Dorsolateral prefrontal cortex (tissue), 120 donors: ENCODE measurements at regions of chr7 and their contacts with region 1.

Region 1: DNA sequence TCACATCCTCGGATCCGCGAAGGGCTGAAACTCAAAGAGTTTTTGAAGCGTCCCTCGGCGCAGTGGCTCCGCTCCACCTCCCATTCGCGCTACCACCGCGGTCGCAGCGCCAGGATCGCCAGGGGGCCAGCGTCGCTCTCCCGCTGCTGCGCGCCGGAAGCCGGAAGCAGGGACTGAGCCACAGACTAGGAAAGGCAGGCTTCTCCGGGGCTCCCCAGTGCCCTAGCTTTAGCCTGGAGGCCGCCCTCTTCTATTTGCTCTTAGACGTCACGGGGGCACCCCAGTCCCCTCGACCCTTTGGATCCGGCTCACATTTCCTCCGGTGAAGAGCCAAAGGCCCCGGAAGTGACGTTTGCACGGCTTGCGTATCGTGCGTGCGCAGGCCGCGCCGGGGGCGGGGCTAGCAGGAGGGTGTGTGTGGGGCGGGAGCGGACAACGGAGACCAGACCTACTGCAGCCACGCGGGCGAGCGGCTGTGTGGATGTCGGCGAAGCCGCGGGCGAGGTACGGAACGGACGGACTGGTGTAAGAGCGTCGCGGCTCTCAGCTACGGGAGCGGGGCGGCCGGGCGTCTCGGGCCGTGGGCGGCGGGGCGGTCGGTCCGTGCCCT is 25.5 kb downstream of the KCTD7 start:
- DNase-seq: peak; percentile 98 to 99 (median 98)
- H3K4me3 ChIP-seq: peak overlapping the region; percentile 68 to 99 (median 92)
- H3K27ac ChIP-seq: peak overlapping the region; percentile 90 to 99 (median 98)
- H3K27me3 ChIP-seq: no peaks in the 10 kb centered on the region
- CTCF ChIP-seq: peak in 54 of 56 donors; percentile 3 to 76 (median 52)

Region 2: DNA sequence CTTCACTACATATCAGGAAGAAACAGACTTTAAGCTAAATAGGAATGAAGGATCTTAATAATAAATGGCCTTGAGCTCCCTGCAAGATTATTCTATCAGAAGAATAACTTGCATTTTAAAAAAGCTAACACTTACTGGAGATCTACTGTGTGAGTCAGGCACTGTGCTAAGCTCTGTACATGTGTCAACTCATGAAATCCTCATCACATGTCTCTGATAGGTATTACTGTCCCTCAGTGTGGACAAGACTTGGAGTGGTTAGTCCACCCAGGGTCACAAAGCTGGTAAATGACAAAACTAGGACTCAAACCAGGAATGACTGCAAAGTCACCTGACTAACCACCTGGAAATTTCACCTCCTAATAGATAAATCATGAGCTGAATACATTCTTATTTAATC is 82.7 kb before region 1 on chr7:
- intact Hi-C with region 1: no loop called
- DNase-seq: no peak
- H3K4me3 ChIP-seq: no peak overlapping the region
- H3K27ac ChIP-seq: no peak overlapping the region
- H3K27me3 ChIP-seq: no peaks in the 10 kb centered on the region
- CTCF ChIP-seq: no peak

Region 3: GRCh38 chr7:66664650-66665293 is 10.5 kb after region 1 on chr7:
- intact Hi-C with region 1: loop called in 1 of 2 experiments (anchors 2 kb)
- DNase-seq: no peak
- H3K4me3 ChIP-seq: no peak overlapping the region
- H3K27ac ChIP-seq: peak overlapping the region in 39 of 59 donors; percentile 1 to 100 (median 56)
- H3K27me3 ChIP-seq: no peaks in the 10 kb centered on the region
- CTCF ChIP-seq: no peak

Region 4: DNA sequence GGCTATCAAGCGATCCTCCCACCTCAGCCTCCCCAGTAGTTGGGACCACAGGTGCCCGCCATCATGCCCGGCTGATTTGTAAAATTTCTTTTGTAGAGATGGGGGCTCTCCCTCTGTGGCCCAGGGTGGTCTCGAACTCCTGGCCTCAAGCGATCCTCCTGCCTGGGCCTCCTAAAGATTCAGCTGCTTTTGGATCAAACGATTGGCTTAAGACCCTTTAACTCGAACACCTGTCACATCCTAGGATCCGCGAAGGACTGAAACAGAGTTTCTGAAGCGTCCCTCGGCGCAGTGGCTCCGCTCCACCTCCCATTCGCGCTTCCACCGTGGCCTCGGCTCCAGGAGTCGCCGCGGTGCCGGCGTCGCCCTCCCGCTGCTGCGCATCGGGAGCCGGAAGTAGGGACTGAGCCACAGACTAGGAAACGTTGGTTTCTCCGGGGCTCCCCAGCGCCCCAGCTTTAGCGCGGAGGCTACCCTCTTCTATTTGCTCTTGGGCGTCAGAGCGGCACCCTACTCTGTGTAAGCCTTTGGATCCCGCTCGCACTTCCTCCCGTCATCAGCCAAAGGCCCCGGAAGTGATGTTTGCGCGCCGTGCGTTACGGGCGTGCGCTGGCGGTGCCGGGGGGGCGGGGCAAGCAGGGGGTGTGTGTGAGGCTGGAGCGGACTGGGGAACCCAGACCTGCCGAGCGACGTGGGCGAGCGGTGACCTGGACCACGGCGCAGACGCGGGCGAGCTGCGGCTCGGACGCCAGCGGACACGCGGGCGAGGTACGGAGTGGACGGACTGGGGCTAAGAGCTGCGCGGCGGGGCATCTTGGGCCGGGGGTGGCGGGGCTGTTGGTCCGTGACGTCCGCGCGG is 27.5 kb after region 1 on chr7:
- intact Hi-C with region 1: loop called in 1 of 2 experiments (anchors 1 kb)
- DNase-seq: peak; percentile 92 to 98 (median 96)
- H3K4me3 ChIP-seq: peak overlapping the region; percentile 71 to 99 (median 94)
- H3K27ac ChIP-seq: peak overlapping the region; percentile 43 to 99 (median 96)
- H3K27me3 ChIP-seq: no peaks in the 10 kb centered on the region
- CTCF ChIP-seq: peak in 10 of 56 donors; percentile 9 to 30 (median 14)

Region 5: GRCh38 chr7:66740302-66740979 is 86.2 kb after region 1 on chr7 and contains the start of gene RABGEF1:
- intact Hi-C with region 1: loop called in 1 of 2 experiments (anchors 5 kb)
- DNase-seq: peak; percentile 95 to 99 (median 97)
- H3K4me3 ChIP-seq: peak within 1 kb of the TSS; percentile 56 to 100 (median 95)
- H3K27ac ChIP-seq: peak within 1 kb of the TSS; percentile 68 to 99 (median 94)
- H3K27me3 ChIP-seq: no peaks in the 10 kb centered on the region
- CTCF ChIP-seq: peak in 24 of 56 donors; percentile 5 to 44 (median 21)
- total RNA-seq, gene RABGEF1: 30.2 to 59.5 (median 45.8) TPM